KBM-7 (cell line): ENCODE measurements at regions of chr17 and their contacts with region 1.

Region 1: GRCh38 chr17:27353461-27354050 is 59.6 kb downstream of the WSB1 start:
- DNase-seq: peak; percentile 95

Region 2: DNA sequence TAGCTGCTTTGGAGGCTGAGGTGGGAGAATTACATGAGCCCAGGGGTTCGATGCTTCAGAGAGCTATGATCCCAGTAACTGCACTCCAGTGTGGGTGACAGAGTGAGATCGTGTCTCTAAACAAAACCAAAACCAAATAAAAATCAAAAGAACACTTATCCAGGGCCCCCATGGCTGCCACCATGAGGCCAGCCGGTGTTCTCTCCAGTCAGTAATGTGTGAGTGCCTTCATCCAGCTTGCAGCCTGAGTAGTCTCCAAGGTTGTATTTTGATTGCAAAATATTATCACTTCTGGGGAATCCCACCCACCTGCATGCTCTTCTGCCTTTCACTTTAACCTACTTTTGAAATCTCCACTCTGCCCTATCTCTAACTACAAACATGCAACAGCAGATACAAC is 280.7 kb before region 1 on chr17:
- in situ Hi-C with region 1: loop called (anchors 25 kb)
- DNase-seq: no peak

Region 3: GRCh38 chr17:27282054-27282551 is 71.5 kb before region 1 on chr17:
- in situ Hi-C with region 1: no loop called
- DNase-seq: no peak

Region 4: GRCh38 chr17:27413792-27414191 is 60.2 kb after region 1 on chr17:
- in situ Hi-C with region 1: loop called (anchors 10 kb)
- DNase-seq: peak; percentile 34

Region 5: DNA sequence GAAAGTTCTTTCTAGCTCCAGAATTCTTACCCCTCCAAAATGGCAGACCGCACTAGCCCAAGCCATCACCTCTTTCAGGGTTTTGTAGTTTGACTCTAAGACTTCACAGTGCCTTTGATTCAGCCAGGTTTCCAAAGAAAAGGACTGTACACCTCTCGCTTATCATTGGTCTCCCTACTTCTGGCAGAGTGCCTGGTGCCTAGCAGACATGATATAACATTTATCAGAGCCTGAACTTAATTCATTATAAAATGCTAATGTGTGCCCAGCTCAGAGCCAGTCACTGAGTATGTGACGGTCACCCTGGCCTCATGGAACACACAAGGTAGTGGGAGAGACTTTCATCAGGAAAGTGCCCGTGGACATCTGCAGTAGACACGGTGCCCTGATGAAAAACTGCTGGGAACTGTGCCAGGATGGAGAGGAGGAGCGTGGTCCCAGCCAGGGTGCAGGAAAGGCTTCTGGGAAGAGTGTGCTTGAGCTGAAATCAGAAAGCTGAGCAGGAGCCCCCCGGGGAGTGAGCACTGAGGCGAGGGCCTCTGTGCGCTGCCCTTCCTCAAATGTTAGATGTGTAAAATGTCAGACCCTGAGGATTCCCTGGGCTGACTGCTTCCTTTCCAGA is 243.1 kb after region 1 on chr17:
- in situ Hi-C with region 1: loop called (anchors 10 kb)
- DNase-seq: no peak